ENCODE measurements at regions of chr18 and their contacts with region 1.

Region 1: GRCh38 chr18:75809926-75810255 is 382.4 kb upstream of the SMIM21 start:
- DNase-seq: no peak
- ATAC-seq: no peak
- H3K4me3 ChIP-seq: no peak overlapping the region
- H3K27ac ChIP-seq: no peak overlapping the region
- H3K4me1 ChIP-seq: no peaks in the 10 kb centered on the region
- H3K27me3 ChIP-seq: peaks cover 0 to 12% (median 3%) of the 10 kb centered on the region in 7 donors
- CTCF ChIP-seq: no peak

Region 2: GRCh38 chr18:75742516-75742915 is 67.4 kb before region 1 on chr18:
- intact Hi-C with region 1: loop called in 1 of 10 experiments (anchors 10 kb)
- DNase-seq: no peak
- ATAC-seq: no peak
- H3K4me3 ChIP-seq: no peak overlapping the region
- H3K27ac ChIP-seq: no peak overlapping the region
- H3K4me1 ChIP-seq: no peaks in the 10 kb centered on the region
- H3K27me3 ChIP-seq: no peaks in the 10 kb centered on the region
- CTCF ChIP-seq: no peak

Region 3: GRCh38 chr18:75829091-75829490 is 19.2 kb after region 1 on chr18:
- intact Hi-C with region 1: no loop called
- DNase-seq: no peak
- ATAC-seq: no peak
- H3K4me3 ChIP-seq: no peak overlapping the region
- H3K27ac ChIP-seq: no peak overlapping the region
- H3K4me1 ChIP-seq: no peaks in the 10 kb centered on the region
- H3K27me3 ChIP-seq: no peaks in the 10 kb centered on the region
- CTCF ChIP-seq: no peak